Thyroid gland (tissue), 4 donors: ENCODE measurements at regions of chr18 and their contacts with region 1.

Region 1: GRCh38 chr18:75070625-75071483 is 138.1 kb downstream of the PTGR3 start:
- DNase-seq: peak; percentile 56 to 59
- H3K4me3 ChIP-seq: peak overlapping the region in 1 of 3 donors; percentile 8
- H3K27ac ChIP-seq: peak overlapping the region; percentile 87 to 98 (median 96)
- H3K4me1 ChIP-seq: peaks cover 18 to 33% of the 10 kb centered on the region in 2 donors
- H3K27me3 ChIP-seq: no peaks in the 10 kb centered on the region
- CTCF ChIP-seq: no peak
- POLR2A ChIP-seq: peak in 1 of 2 donors; percentile 74

Region 2: GRCh38 chr18:75209129-75209950 is 138.5 kb after region 1 on chr18 and contains the start of gene PTGR3:
- intact Hi-C with region 1: loop called (anchors 10 kb)
- DNase-seq: peak; percentile 89 to 90
- H3K4me3 ChIP-seq: peak within 1 kb of the TSS; percentile 54 to 95 (median 94)
- H3K27ac ChIP-seq: peak within 1 kb of the TSS; percentile 89 to 99 (median 98)
- H3K4me1 ChIP-seq: peaks cover 40 to 45% of the 10 kb centered on the region in 2 donors
- H3K27me3 ChIP-seq: no peaks in the 10 kb centered on the region
- CTCF ChIP-seq: no peak
- POLR2A ChIP-seq: peak; percentile 33 to 78
- total RNA-seq, gene PTGR3: 19.3 to 62.7 (median 36.9) TPM